CD8-positive, alpha-beta T cell (primary cell): ENCODE measurements at regions of chr18 and their contacts with region 1.

Region 1: GRCh38 chr18:51197661-51198424 is at the start of gene MEX3C:
- DNase-seq: peak; percentile 97 to 99 (median 99)
- ATAC-seq: peak; percentile 82
- H3K4me3 ChIP-seq: peak within 1 kb of the TSS; percentile 83 to 96
- H3K4me3 Mint-ChIP-seq: peak within 1 kb of the TSS; percentile 96
- H3K27ac ChIP-seq: peak within 1 kb of the TSS; percentile 80
- H3K27ac Mint-ChIP-seq: peak within 1 kb of the TSS; percentile 95
- H3K4me1 ChIP-seq: peaks cover 24% of the 10 kb centered on the region
- H3K4me1 Mint-ChIP-seq: peaks cover 33% of the 10 kb centered on the region
- H3K27me3 ChIP-seq: no peaks in the 10 kb centered on the region
- H3K27me3 Mint-ChIP-seq: no peaks in the 10 kb centered on the region
- CTCF ChIP-seq: peak; percentile 34
- total RNA-seq, gene MEX3C: 78.7 to 83.3 TPM

Region 2: DNA sequence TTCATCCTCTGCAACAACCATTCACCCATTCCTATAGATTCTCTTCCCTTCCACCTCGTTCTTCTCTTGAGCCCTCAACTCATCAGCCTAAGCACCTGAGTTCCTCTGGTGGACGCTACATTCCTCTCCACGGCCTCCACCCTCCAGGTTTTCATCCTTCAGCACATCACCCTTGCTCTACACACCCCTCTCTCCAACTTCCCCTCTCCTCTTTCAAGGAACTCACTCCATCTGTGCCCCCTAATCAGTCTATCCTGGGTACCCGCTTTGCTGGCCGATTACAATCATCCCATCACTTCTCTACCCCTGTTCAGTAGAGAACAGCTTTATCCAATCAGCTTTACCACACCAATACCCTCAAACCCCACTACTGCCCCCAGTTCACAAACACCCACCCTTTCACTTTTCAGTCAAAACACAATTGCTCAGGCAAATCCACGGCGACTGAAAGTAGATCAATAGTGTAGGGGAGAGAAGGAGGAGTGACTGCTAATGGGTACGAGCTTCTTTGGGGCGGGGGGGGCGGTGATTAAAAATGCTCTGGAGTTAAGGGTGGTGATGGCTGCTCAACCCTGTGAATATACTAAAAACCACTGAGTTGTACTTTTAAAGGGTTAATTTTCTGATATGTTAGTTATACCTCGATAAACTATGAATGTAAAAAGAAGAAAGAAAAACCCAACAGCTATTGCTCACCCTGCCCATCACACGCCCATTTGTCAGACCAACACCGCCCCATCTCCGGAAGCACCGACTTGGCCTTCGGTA is 1738.3 kb before region 1 on chr18:
- CTCF ChIA-PET with region 1: no interaction called
- POLR2A ChIA-PET with region 1: no interaction called
- intact Hi-C with region 1: loop called in 1 of 2 experiments (anchors 5 kb)
- DNase-seq: peak in 4 of 9 experiments; percentile 10 to 54 (median 30)
- ATAC-seq: peak; percentile 9
- H3K4me3 ChIP-seq: peak overlapping the region; percentile 88 to 94
- H3K4me3 Mint-ChIP-seq: peak overlapping the region; percentile 93
- H3K27ac ChIP-seq: peak overlapping the region in 1 of 2 experiments; percentile 74
- H3K27ac Mint-ChIP-seq: peak overlapping the region; percentile 90
- H3K4me1 ChIP-seq: peaks cover 17% of the 10 kb centered on the region
- H3K4me1 Mint-ChIP-seq: peaks cover 52% of the 10 kb centered on the region
- H3K27me3 ChIP-seq: no peaks in the 10 kb centered on the region
- H3K27me3 Mint-ChIP-seq: no peaks in the 10 kb centered on the region
- CTCF ChIP-seq: no peak

Region 3: DNA sequence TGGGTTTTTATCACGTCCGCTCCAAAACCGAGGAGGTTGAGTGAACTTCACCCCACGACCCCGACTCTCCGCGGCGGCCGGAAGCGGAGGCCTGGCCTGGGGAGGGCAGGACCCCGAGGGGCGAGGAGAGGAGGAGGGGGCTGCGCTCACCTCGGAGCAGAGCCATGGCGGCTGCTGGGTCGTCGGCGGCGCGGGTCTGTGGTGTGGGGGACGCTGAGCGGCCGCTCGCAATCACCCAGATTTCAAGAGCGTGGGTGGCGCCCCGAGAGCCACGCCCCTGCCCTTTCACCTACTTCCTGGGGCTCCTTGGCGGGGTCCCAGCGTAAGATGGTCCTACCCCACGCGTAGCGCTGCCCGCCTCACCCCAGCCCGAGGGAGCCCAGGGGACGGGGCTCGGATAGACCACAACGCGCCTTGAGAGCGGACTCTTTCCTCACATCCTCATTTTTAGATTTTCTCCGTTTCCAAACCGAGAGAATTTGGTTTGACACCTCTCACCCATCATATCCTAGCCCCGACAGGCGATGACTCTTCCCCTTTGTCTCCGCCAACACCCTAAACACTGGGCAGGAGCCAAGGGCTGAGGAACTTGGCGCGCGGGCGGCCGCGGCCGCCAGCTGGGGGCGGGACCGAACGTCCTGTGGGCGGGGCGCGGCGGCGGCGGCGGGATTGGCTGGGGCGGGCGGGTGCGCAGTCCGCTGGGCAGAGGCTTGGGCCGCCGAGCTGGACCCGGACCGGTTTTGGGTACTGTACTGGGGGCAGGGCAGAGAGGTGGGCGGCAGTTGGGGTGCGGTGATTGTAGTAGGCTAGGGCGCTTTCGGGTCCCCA is 1384.3 kb before region 1 on chr18 and contains the start of gene ACAA2:
- CTCF ChIA-PET with region 1: no interaction called
- POLR2A ChIA-PET with region 1: no interaction called
- intact Hi-C with region 1: loop called in 1 of 2 experiments (anchors 10 kb)
- DNase-seq: peak; percentile 53 to 91 (median 77)
- ATAC-seq: peak; percentile 81
- H3K4me3 ChIP-seq: peak within 1 kb of the TSS; percentile 88 to 93
- H3K4me3 Mint-ChIP-seq: peak within 1 kb of the TSS; percentile 97
- H3K27ac ChIP-seq: peak within 1 kb of the TSS; percentile 90 to 95
- H3K27ac Mint-ChIP-seq: peak within 1 kb of the TSS; percentile 95
- H3K4me1 ChIP-seq: peaks cover 37% of the 10 kb centered on the region
- H3K4me1 Mint-ChIP-seq: peaks cover 62% of the 10 kb centered on the region
- H3K27me3 ChIP-seq: no peaks in the 10 kb centered on the region
- H3K27me3 Mint-ChIP-seq: no peaks in the 10 kb centered on the region
- CTCF ChIP-seq: no peak
- total RNA-seq, gene ACAA2: 9.5 to 10.0 TPM

Region 4: DNA sequence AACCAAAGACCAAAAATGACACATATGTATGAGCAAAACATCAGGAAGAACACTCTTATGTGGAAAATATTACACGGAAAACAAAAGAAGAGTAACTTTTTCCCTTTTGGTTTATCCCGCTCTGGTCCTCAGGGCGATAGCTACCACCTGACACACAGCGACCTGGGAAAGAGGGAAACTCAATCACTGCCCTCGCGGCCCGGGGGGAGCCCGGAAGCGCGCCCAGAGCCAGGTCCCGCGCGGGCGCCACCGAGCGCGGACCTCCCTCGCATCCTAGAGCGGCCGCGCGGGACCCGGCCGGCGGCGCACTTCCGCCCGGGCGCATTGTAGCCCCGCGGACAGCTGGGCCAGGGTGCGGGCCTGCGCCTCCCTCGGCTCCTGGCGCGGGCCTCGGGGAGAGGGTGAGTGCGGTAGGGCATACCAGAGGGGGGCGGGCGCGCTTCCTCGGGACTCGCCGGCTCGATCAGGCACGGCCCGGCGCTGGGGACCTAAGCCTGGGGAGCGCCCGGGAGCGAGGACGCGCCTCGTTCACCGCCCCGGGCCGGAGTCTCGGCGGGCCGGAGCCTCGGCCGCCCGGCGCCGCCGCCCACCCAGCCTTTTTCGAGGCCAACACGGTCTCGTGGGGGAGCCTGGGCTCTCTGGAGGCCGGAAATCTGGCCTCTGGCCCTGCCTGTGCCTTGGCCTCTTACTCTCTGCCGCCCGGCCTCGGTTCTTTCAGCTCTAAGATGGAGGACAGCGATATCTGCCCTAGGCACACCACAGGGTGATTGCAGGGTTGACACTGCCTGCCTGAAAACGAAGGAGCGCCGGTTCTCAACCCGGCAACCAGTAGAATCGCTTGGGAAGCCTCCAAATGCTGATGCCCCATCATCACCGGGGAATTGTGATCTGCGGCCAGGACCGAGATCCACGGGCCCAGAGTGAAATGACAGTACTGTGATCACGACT is 229.9 kb before region 1 on chr18 and contains the start of gene ELAC1:
- CTCF ChIA-PET with region 1: no interaction called
- POLR2A ChIA-PET with region 1: interaction called, 11 read pairs
- intact Hi-C with region 1: loop called (anchors 1 to 5 kb)
- DNase-seq: peak; percentile 37 to 85 (median 64)
- ATAC-seq: peak; percentile 85
- H3K4me3 ChIP-seq: peak within 1 kb of the TSS; percentile 67 to 71
- H3K4me3 Mint-ChIP-seq: peak within 1 kb of the TSS; percentile 94
- H3K27ac ChIP-seq: peak within 1 kb of the TSS; percentile 86 to 89
- H3K27ac Mint-ChIP-seq: peak within 1 kb of the TSS; percentile 96
- H3K4me1 ChIP-seq: peaks cover 15% of the 10 kb centered on the region
- H3K4me1 Mint-ChIP-seq: peaks cover 28% of the 10 kb centered on the region
- H3K27me3 ChIP-seq: no peaks in the 10 kb centered on the region
- H3K27me3 Mint-ChIP-seq: no peaks in the 10 kb centered on the region
- CTCF ChIP-seq: no peak
- total RNA-seq, gene ELAC1: 3.5 to 4.0 TPM

Region 5: DNA sequence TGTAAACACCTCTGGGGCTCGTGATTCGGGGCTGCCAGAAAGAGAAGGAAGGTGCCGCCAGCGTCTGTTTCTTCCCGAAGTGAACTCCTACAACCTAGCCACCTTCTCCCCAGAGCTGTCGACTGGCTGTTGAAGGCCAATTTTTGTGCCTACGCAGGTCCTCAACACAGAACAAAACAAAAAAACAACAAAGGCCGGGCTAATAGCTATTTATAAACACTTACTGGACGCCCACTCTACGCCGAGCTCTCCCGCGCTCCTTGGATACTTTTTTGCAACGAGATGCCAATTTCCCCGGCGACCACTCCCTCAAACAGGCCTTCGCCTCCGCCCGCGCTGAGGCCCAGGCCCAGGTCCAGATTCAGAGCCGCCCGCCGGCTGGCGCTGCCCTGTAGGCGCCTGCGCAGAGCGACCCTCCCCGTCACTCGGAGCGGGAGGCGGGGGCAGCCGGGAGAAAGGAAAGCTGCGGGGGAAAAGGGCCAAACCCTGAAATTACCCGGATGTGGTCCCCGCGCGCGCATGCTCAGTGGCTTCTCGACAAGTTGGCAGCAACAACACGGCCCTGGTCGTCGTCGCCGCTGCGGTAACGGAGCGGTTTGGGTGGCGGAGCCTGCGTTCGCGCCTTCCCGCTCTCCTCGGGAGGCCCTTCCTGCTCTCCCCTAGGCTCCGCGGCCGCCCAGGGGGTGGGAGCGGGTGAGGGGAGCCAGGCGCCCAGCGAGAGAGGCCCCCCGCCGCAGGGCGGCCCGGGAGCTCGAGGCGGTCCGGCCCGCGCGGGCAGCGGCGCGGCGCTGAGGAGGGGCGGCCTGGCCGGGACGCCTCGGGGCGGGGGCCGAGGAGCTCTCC is 167.9 kb before region 1 on chr18 and contains the start of gene SMAD4:
- CTCF ChIA-PET with region 1: no interaction called
- POLR2A ChIA-PET with region 1: interaction called, 16 read pairs
- intact Hi-C with region 1: loop called (anchors 1 to 2 kb)
- DNase-seq: peak; percentile 94 to 99 (median 98)
- ATAC-seq: peak; percentile 83
- H3K4me3 ChIP-seq: peak within 1 kb of the TSS; percentile 74 to 80
- H3K4me3 Mint-ChIP-seq: peak within 1 kb of the TSS; percentile 97
- H3K27ac ChIP-seq: peak within 1 kb of the TSS; percentile 81 to 91
- H3K27ac Mint-ChIP-seq: peak within 1 kb of the TSS; percentile 99
- H3K4me1 ChIP-seq: peaks cover 41% of the 10 kb centered on the region
- H3K4me1 Mint-ChIP-seq: peaks cover 65% of the 10 kb centered on the region
- H3K27me3 ChIP-seq: no peaks in the 10 kb centered on the region
- H3K27me3 Mint-ChIP-seq: no peaks in the 10 kb centered on the region
- CTCF ChIP-seq: no peak
- total RNA-seq, gene SMAD4: 80.4 to 86.5 TPM

Region 6: GRCh38 chr18:51044928-51045585 is 152.8 kb before region 1 on chr18:
- CTCF ChIA-PET with region 1: no interaction called
- POLR2A ChIA-PET with region 1: no interaction called
- intact Hi-C with region 1: loop called in 1 of 2 experiments (anchors 5 kb)
- DNase-seq: no peak
- ATAC-seq: no peak
- H3K4me3 ChIP-seq: no peak overlapping the region
- H3K4me3 Mint-ChIP-seq: peak overlapping the region; percentile 44
- H3K27ac ChIP-seq: no peak overlapping the region
- H3K27ac Mint-ChIP-seq: peak overlapping the region; percentile 86
- H3K4me1 ChIP-seq: peaks cover 34% of the 10 kb centered on the region
- H3K4me1 Mint-ChIP-seq: peaks cover 61% of the 10 kb centered on the region
- H3K27me3 ChIP-seq: no peaks in the 10 kb centered on the region
- H3K27me3 Mint-ChIP-seq: no peaks in the 10 kb centered on the region
- CTCF ChIP-seq: no peak

Region 7: DNA sequence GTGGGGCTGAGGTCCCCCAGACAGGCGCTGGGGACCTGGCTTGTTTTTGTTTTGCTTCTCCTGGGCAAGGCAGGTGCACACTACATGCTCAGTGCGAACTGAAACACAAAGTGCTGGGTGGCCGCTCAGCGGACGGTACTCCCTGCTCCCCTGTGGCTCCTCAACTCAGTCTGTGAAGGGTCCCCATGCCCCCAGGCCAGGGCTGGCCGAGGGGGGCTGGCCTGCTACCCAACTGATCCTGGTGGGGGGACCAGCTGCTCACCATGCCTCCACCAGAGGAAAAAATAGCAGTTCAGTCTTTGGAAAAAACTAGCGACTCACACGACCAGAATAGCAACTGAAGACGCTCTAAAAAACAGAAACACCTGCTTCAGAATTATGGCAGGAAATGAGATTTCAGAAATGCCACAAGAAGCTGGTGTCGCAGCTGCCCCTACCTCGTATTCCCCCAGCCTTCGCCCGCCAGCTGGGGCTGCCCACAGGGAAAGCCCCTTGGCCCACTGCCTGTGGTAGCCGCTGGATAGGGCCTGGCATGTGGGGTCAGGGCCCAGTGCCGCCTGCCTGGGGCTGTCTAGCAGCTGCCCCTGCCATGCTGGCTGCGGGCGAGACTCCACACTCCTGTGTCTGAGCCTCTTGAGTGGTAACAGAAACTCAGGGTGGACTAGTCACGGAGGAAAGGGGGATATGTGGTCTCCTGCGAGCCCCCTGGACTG is 44.0 kb before region 1 on chr18:
- CTCF ChIA-PET with region 1: interaction called, 9 read pairs
- POLR2A ChIA-PET with region 1: interaction called, 40 read pairs
- intact Hi-C with region 1: loop called (anchors 1 to 2 kb)
- DNase-seq: peak in 8 of 9 experiments; percentile 33 to 81 (median 54)
- ATAC-seq: peak; percentile 46
- H3K4me3 ChIP-seq: peak overlapping the region; percentile 40 to 49
- H3K4me3 Mint-ChIP-seq: peak overlapping the region; percentile 82
- H3K27ac ChIP-seq: peak overlapping the region; percentile 19 to 71
- H3K27ac Mint-ChIP-seq: peak overlapping the region; percentile 93
- H3K4me1 ChIP-seq: peaks cover 34% of the 10 kb centered on the region
- H3K4me1 Mint-ChIP-seq: peaks cover 33% of the 10 kb centered on the region
- H3K27me3 ChIP-seq: no peaks in the 10 kb centered on the region
- H3K27me3 Mint-ChIP-seq: no peaks in the 10 kb centered on the region
- CTCF ChIP-seq: no peak